Heart left ventricle (tissue), 16 donors: ENCODE measurements at regions of chr11 and their contacts with region 1.

Region 1: DNA sequence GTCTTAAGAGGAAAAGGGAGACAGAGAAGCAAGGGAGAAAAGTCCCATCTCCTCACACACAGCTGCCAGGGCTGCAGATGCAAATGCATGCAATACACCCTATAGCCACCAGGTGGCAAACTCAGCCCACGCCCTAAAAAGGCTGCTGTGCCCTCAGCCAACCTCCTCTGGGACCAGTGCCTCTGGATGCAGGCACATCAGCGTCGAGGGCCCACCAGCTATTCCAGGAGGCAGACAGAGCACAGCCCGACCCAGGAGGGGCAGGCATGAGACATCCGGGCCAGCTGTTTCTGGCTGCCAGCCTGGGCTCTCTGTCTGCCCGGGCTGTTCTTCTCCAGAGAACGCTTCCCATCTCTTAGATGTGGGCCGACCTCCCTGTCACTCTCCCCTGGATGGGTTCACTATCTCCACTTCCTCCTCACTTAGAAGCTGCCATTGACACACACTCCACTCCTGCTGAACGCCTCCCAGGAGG is 39.7 kb downstream of the TPBGL start:
- DNase-seq: peak; percentile 69 to 86 (median 82)
- ATAC-seq: peak; percentile 77 to 90 (median 84)
- H3K4me3 ChIP-seq: no peak overlapping the region
- H3K27ac ChIP-seq: peak overlapping the region in 6 of 12 donors; percentile 2 to 43 (median 22)
- H3K4me1 ChIP-seq: peaks cover 0 to 31% (median 14%) of the 10 kb centered on the region in 12 donors
- H3K27me3 ChIP-seq: no peaks in the 10 kb centered on the region
- CTCF ChIP-seq: peak; percentile 93 to 100 (median 99)
- POLR2A ChIP-seq: no peak

Region 2: GRCh38 chr11:75328426-75329277 is 48.4 kb after region 1 on chr11:
- intact Hi-C with region 1: loop called in 9 of 10 experiments (anchors 2 to 5 kb)
- DNase-seq: peak; percentile 68 to 79 (median 71)
- ATAC-seq: peak; percentile 68 to 86 (median 82)
- H3K4me3 ChIP-seq: no peak overlapping the region
- H3K27ac ChIP-seq: peak overlapping the region in 3 of 12 donors; percentile 5 to 60 (median 53)
- H3K4me1 ChIP-seq: peaks cover 0 to 68% (median 21%) of the 10 kb centered on the region in 12 donors
- H3K27me3 ChIP-seq: no peaks in the 10 kb centered on the region
- CTCF ChIP-seq: peak; percentile 57 to 80 (median 69)
- POLR2A ChIP-seq: no peak

Region 3: DNA sequence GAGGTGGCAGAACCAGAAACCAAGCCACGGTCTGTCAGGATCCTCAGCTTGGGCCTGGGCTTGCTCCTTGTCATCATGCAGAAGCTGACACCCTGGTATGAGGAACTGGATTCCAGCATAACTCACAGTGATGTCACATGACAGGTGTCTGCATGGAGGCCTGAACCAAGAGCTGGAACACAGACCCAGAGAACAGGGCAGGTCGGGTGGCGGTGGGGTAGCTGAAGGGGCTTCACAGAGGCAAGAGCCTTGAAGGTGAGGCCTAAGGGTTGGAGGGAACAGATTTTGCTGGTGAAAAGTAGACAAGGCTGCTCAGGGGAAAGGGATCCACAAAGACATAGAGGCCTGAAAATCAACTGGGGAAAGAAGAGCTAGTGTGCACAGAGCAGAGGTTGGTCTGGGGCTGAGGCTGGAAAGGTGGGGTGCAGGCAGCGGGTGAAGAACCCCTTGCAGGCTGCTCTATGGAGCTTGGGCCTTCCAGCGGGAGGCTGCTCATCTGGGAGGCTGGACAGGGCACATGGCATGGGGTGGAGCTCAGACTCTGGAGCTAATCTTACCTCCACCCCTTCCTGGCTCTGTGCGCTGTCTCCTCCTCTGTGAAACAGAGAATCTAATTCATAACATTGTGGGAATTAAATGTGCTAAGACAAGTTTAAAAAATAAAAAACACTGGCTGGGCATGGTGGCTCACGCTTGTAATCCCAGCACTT is 100.6 kb after region 1 on chr11:
- intact Hi-C with region 1: loop called (anchors 1 to 2 kb)
- DNase-seq: peak in 2 of 5 donors; percentile 27 to 45
- ATAC-seq: peak in 3 of 4 donors; percentile 68 to 82 (median 75)
- H3K4me3 ChIP-seq: no peak overlapping the region
- H3K27ac ChIP-seq: peak overlapping the region in 1 of 12 donors; percentile 29
- H3K4me1 ChIP-seq: peaks cover 0 to 29% (median 2%) of the 10 kb centered on the region in 12 donors
- H3K27me3 ChIP-seq: peaks cover 0 to 4% (median 0%) of the 10 kb centered on the region in 9 donors
- CTCF ChIP-seq: no peak
- POLR2A ChIP-seq: no peak

Region 4: GRCh38 chr11:75525596-75526541 is 245.6 kb after region 1 on chr11 and contains the start of gene GDPD5:
- intact Hi-C with region 1: loop called in 5 of 10 experiments (anchors 5 to 10 kb)
- DNase-seq: peak; percentile 85 to 92 (median 86)
- ATAC-seq: peak; percentile 88 to 98 (median 96)
- H3K4me3 ChIP-seq: peak within 1 kb of the TSS; percentile 63 to 96 (median 77)
- H3K27ac ChIP-seq: peak within 1 kb of the TSS in 4 of 12 donors; percentile 18 to 62 (median 34)
- H3K4me1 ChIP-seq: peaks cover 0 to 33% (median 16%) of the 10 kb centered on the region in 12 donors
- H3K27me3 ChIP-seq: no peaks in the 10 kb centered on the region
- CTCF ChIP-seq: peak in 10 of 12 donors; percentile 39 to 73 (median 64)
- POLR2A ChIP-seq: peak in 1 of 2 donors; percentile 56
- total RNA-seq, gene GDPD5: 2.0 to 12.5 (median 5.1) TPM

Region 5: DNA sequence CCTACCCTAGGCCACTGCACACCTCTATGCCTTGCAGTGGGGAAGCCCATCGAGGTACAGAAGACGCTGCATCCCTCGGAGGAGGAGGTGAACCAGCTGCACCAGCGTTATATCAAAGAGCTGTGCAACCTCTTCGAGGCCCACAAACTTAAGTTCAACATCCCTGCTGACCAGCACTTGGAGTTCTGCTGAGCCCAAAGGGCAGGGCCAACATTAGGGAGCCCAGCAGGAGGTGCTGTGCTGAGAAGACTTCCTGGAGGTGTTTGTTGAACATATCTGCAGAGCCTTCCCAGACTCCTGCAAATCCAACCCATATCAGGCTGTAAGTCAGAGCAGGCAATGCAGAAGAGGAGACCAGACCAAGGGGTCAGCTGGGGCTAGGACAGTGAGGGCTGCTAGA is 450.8 kb after region 1 on chr11:
- intact Hi-C with region 1: no loop called
- DNase-seq: no peak
- ATAC-seq: no peak
- H3K4me3 ChIP-seq: no peak overlapping the region
- H3K27ac ChIP-seq: no peak overlapping the region
- H3K4me1 ChIP-seq: peaks cover 0 to 29% (median 10%) of the 10 kb centered on the region in 12 donors
- H3K27me3 ChIP-seq: no peaks in the 10 kb centered on the region
- CTCF ChIP-seq: no peak
- POLR2A ChIP-seq: no peak